Left cardiac atrium (tissue), 4 donors: ENCODE measurements at regions of chr1 and their contacts with region 1.

Region 1: GRCh38 chr1:184805667-184806295 is 51.1 kb upstream of the EDEM3 start:
- DNase-seq: peak; percentile 89
- ATAC-seq: peak; percentile 95 to 96

Region 2: DNA sequence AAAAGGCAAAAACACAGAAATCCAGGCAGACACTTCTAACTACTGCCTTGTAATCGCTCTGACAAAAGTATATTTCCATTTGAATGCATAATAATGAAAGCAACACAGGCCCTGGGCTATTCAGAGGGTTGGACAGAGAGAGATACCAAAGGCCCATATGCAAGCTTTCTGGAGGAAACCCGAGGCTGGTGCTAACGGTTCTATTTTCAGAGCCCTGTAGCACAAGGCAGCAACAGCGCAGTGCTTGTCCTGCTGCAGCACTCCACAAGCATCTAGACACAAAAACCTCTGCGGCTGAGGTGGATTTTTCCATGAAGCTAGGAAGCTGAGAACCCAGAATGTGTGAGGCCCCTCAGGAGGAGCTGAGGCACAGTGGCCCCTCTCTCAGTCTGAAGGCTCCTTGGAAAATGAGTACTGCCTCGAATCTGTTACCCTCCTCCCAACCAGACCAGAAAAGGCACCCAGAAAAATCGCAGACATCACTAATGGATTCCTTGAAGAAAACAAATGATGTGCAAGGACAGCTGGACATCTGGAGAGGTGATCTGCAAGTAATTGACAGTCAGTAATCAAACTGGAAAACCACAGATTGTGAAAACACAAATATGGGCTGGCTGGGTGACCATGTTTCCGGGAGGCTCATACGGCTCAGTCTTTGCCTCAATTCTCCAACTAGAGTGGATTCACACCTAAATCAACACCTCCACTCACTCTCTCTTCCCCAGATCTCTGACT is 822.2 kb before region 1 on chr1:
- intact Hi-C with region 1: no loop called
- DNase-seq: no peak
- ATAC-seq: peak; percentile 42 to 59

Region 3: GRCh38 chr1:184567642-184568041 is 238.1 kb before region 1 on chr1:
- intact Hi-C with region 1: no loop called
- DNase-seq: no peak
- ATAC-seq: no peak

Region 4: DNA sequence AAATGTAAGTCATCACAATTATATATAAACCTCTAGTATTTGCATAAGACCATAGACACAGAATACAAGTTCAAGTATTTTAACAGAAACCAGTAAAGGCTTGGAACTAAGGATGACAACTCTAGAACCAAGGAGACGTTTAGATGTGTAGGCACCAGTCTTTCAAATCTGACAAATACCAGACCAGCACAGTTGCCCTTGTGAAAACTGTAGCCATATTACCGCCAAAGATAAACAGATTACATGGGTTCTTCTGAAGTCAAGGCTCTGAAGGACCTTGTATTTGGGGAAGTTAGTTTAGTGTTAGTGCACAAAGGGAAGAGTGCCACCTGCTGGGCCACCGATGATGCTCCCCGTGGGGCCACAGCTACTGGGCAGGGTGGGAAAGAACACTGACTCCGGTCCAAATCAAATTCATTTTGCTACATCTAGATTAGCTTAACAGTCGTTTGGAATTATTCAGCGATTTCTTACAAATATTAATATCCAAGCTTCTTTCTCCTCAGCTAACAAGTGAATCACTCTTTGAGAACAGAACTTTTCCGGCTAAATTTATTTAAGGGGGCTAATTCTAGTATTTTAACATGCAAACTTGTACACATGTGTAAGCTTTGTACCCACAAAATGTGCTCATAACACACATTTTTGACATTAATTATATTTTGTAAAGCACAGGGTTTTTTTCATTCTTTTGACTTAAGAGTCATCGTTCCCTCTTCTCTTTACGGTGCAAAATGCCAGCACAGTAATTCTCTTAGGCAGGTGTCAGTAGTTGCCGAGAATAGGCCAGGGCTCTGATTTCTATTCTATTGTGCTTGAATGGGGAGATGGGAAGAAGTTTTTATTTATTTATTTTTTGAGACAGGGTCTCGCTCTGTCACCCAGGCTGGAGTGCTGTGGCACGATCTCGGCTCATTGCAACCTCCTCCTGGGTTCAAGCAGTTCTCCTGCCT is 176.5 kb after region 1 on chr1:
- intact Hi-C with region 1: loop called (anchors 1 to 5 kb)
- DNase-seq: peak; percentile 83
- ATAC-seq: peak; percentile 97 to 98